K562 (cell line): ENCODE measurements at regions of chr16 and their contacts with region 1.

Region 1: GRCh38 chr16:82456683-82457082 is 170.1 kb upstream of the CDH13 start:
- DNase-seq: peak; percentile 60 to 74 (median 70)
- ATAC-seq: peak; percentile 95
- H3K4me3 ChIP-seq: no peak overlapping the region
- H3K27ac ChIP-seq: no peak overlapping the region
- H3K4me1 ChIP-seq: no peaks in the 10 kb centered on the region
- H3K27me3 ChIP-seq: no peaks in the 10 kb centered on the region
- CTCF ChIP-seq: peak; percentile 61 to 71 (median 67)
- EP300 ChIP-seq: no peak
- POLR2A ChIP-seq: no peak
- RAD21 ChIP-seq: peak in 1 of 2 experiments; percentile 60; a peak in 2 of 4 replicates

Region 2: DNA sequence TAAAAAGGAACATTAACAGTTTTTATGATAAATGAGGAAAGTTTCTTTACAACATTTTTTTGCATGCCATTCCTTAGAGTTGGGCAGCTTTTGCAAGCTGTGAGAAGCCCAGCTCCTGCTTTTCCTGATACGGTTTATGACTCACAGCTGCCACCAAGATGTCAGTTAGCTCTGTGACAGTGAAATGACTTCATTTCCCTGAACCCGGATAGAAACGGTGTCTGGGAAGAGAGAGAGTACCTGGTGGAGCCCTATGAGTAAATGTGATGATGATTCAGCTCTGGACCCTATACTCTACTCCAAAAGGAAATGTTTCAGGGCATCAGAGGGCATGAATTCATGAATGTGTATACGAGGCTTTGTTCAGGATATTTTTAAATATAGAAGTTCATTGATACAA is 984.8 kb after region 1 on chr16:
- CTCF ChIA-PET with region 1: no interaction called
- POLR2A ChIA-PET with region 1: no interaction called
- in situ Hi-C with region 1: no loop called
- intact Hi-C with region 1: loop called (anchors 10 kb)
- DNase-seq: no peak
- ATAC-seq: no peak
- H3K4me3 ChIP-seq: no peak overlapping the region
- H3K27ac ChIP-seq: no peak overlapping the region
- H3K4me1 ChIP-seq: no peaks in the 10 kb centered on the region
- H3K27me3 ChIP-seq: no peaks in the 10 kb centered on the region; a peak in 1 of 5 replicates
- CTCF ChIP-seq: no peak
- EP300 ChIP-seq: no peak
- POLR2A ChIP-seq: no peak
- RAD21 ChIP-seq: no peak